AG04449 (cell line): ENCODE measurements at regions of chrX and their contacts with region 1.

Region 1: DNA sequence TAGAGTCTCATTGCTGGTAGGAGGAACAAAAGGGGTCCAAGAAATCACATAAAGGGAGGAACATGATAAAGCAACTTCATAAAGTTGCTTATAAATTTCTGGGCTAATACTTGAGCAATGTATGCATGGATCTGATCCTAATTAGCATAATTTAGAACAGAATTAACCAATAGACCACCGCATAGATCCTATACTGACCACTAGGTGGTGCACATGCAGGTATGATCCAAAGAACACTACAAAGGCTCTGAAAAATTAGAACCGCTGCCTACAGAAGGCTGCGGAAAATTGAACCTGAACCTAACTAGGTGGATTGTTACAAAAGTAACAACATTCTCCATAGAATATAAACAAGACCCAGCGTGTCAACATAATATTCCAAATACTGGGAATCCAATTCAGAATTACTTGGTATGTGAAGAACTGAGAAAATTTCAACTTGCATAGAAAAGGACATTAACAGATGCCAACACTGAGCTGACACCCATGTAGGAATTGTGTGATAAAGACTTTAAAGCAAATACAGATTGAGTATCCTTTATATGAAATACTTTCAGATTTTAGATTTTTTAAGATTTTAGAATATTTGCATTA is 23.3 kb downstream of the BRCC3 start:
- DNase-seq: no peak
- H3K4me3 ChIP-seq: no peak overlapping the region
- CTCF ChIP-seq: peak; percentile 32

Region 2: DNA sequence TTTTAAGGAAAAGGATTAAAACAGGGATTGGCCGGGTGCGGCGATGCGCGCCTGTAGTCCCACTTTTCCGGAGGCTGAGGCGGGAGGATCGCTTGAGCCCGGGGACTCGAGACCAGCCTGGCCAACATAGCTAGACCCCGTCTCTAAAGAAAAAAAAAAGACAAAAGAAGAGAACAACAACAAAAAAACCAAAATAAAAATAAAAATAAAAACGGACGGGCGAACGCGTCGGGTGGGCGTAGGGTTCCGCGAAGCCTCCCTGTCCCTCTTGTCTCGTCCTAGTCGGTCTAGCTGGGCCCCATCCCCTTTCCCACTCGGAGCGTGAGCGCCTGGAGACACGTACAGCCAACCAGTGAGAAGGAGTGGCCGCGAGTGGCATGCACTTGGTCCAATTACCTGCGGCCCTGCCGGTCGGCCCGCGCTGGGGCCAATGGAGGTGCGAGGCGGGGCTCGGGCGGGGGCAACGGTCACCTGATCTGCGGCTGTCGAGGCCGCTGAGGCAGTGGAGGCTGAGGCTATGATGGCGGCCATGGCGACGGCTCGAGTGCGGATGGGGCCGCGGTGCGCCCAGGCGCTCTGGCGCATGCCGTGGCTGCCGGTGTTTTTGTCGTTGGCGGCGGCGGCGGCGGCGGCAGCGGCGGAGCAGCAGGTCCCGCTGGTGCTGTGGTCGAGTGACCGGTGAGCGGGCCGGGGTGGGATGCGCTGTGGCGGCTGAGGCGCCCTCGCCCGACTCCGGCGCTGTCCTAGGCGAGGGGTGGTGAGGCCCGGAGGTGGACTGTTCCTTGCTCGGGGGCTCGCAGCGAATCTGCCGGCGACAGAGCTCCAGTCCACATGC is 666.2 kb before region 1 on chrX and contains the start of gene ATP6AP1:
- CTCF ChIA-PET with region 1: no interaction called
- POLR2A ChIA-PET with region 1: no interaction called
- DNase-seq: peak; percentile 41
- H3K4me3 ChIP-seq: peak within 1 kb of the TSS; percentile 68
- CTCF ChIP-seq: no peak

Region 3: GRCh38 chrX:155105919-155106318 is 11.4 kb after region 1 on chrX:
- CTCF ChIA-PET with region 1: interaction called, 21 read pairs
- POLR2A ChIA-PET with region 1: no interaction called
- DNase-seq: no peak
- H3K4me3 ChIP-seq: no peak overlapping the region
- CTCF ChIP-seq: no peak

Region 4: DNA sequence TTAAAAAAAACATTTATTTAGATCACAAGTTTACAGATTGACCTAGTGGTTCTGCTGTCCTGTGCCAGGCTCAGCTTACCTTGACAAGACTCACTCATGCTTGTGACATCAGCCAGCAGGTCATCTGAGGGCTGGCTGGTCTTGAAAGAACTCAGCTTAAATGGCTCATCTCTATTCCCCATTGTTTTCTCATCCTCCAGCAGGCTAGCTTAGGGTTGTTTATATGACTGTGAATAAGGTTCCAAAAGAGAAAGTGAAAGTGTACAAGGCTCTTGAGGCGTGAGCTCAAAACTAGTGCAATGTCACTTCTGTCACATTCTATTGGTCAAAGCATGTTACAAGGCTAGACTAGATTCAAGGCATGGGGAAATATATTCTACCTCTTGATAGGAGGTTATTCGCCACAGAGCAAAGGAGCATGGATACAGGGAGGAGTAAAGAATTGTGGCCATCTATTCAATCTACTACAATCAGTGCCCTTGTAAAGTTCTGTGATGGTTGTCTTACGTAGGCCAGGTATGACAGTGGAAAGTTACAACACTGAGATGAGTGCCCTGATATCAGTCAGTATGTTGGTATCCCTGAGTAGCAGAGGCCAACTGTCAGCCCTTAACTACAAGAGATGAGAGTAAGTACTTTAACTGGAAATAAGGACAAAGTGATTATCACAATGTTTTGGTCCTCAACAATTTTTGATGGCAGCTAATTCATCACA is 538.0 kb after region 1 on chrX:
- CTCF ChIA-PET with region 1: no interaction called
- POLR2A ChIA-PET with region 1: no interaction called
- DNase-seq: no peak
- H3K4me3 ChIP-seq: no peak overlapping the region
- CTCF ChIP-seq: no peak